GM12878 (cell line): ENCODE measurements at regions of chr6 and their contacts with region 1.

Region 1: GRCh38 chr6:79544939-79545450 is 7.8 kb upstream of the LCA5 start:
- DNase-seq: peak; percentile 74
- ATAC-seq: peak; percentile 91
- H3K4me3 ChIP-seq: peak overlapping the region; percentile 26; the same call in 1 of the 2 replicates
- H3K27ac ChIP-seq: peak overlapping the region; percentile 75
- H3K4me1 ChIP-seq: peaks cover 21% of the 10 kb centered on the region
- H3K27me3 ChIP-seq: no peaks in the 10 kb centered on the region
- CTCF ChIP-seq: peak; percentile 34 to 56 (median 56)
- EP300 ChIP-seq: peak; percentile 72 to 89; a peak in 3 of 4 replicates
- POLR2A ChIP-seq: no peak
- RAD21 ChIP-seq: peak; percentile 49

Region 2: DNA sequence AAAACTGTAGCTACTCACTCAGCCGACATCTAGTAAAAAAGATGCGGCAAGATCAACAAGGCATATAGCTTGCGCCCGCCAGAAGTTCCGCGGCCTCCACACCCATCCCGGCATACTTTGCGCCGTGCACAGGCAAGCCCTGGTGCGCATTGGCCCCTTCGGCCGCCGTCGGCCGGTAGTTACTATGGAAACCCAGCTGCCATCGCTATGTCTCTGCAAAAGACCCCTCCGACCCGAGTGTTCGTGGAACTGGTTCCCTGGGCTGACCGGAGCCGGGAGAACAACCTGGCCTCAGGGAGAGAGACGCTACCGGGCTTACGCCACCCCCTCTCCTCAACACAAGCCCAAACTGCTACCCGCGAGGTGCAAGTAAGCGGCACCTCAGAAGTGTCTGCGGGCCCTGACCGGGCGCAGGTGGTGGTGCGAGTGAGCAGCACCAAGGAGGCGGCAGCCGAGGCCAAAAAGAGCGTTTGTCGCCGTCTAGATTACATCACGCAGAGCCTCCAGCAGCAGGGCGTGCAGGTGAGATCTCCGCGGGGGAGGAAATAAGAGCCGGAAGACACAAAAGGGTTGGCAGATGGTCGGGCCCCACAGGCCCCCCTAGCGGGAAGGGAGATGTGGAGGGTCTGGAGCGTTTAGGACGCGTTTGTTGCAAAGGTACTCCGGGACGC is 677.5 kb before region 1 on chr6 and contains the start of gene IRAK1BP1:
- CTCF ChIA-PET with region 1: no interaction called
- POLR2A ChIA-PET with region 1: no interaction called
- RAD21 ChIA-PET with region 1: interaction called, 4 read pairs
- SMC1A ChIA-PET with region 1: no interaction called
- in situ Hi-C with region 1: no loop called
- intact Hi-C with region 1: loop called (anchors 10 kb)
- DNase-seq: peak; percentile 49
- ATAC-seq: peak; percentile 98
- H3K4me3 ChIP-seq: peak within 1 kb of the TSS; percentile 90
- H3K27ac ChIP-seq: peak within 1 kb of the TSS; percentile 90
- H3K4me1 ChIP-seq: no peaks in the 10 kb centered on the region
- H3K27me3 ChIP-seq: no peaks in the 10 kb centered on the region
- CTCF ChIP-seq: peak in 2 of 3 experiments; percentile 14 to 25; a peak in 2 of 6 replicates
- EP300 ChIP-seq: no peak
- POLR2A ChIP-seq: peak; percentile 80
- RAD21 ChIP-seq: no peak
- polyA plus RNA-seq, gene IRAK1BP1: 2.3 to 2.6 TPM